Gastrocnemius medialis (tissue), 4 donors: ENCODE measurements at regions of chr12 and their contacts with region 1.

Region 1: DNA sequence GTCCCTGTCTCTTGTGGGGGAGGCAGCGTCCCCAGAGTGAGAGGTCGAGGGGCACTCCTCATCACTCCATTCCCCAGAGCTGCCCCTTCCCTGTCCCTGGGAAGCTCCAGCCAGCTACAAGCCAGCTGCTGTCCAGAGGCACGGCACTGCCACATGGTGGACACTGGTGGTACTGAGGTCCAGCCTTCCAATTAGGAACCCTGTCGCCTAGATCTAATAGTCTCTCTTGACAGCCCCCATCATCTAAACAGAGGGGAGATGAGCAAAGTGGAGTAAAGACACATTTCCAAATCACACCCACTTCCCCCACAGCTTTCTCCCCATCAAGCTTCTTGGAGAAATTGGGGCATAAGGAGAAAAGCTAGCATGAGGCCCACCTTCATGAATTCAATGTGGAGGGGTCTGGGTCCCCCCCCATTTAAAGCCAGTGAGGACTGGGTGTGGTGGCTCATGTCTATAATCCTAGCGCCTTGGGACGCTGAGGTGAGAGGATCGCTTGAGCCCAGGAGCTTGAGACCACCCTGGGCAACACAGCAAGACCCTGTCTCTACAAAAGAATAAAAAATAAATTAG is 2.1 kb upstream of the INHBE start:
- DNase-seq: peak; percentile 65 to 82
- ATAC-seq: peak; percentile 68 to 71
- H3K4me3 ChIP-seq: no peak overlapping the region
- H3K27ac ChIP-seq: peak overlapping the region; percentile 81 to 92 (median 90)
- H3K4me1 ChIP-seq: peaks cover 31 to 51% of the 10 kb centered on the region in 2 donors
- H3K27me3 ChIP-seq: no peaks in the 10 kb centered on the region
- CTCF ChIP-seq: peak; percentile 92 to 96 (median 95)
- POLR2A ChIP-seq: no peak

Region 2: GRCh38 chr12:57213058-57213715 is 239.8 kb before region 1 on chr12:
- in situ Hi-C with region 1: no loop called
- intact Hi-C with region 1: loop called (anchors 2 kb)
- DNase-seq: peak; percentile 72 to 85
- ATAC-seq: peak; percentile 75 to 78
- H3K4me3 ChIP-seq: no peak overlapping the region
- H3K27ac ChIP-seq: no peak overlapping the region
- H3K4me1 ChIP-seq: peaks cover 6 to 23% of the 10 kb centered on the region in 2 donors
- H3K27me3 ChIP-seq: peaks cover 30 to 35% (median 34%) of the 10 kb centered on the region in 3 donors
- CTCF ChIP-seq: peak; percentile 78 to 98 (median 91)
- POLR2A ChIP-seq: no peak

Region 3: DNA sequence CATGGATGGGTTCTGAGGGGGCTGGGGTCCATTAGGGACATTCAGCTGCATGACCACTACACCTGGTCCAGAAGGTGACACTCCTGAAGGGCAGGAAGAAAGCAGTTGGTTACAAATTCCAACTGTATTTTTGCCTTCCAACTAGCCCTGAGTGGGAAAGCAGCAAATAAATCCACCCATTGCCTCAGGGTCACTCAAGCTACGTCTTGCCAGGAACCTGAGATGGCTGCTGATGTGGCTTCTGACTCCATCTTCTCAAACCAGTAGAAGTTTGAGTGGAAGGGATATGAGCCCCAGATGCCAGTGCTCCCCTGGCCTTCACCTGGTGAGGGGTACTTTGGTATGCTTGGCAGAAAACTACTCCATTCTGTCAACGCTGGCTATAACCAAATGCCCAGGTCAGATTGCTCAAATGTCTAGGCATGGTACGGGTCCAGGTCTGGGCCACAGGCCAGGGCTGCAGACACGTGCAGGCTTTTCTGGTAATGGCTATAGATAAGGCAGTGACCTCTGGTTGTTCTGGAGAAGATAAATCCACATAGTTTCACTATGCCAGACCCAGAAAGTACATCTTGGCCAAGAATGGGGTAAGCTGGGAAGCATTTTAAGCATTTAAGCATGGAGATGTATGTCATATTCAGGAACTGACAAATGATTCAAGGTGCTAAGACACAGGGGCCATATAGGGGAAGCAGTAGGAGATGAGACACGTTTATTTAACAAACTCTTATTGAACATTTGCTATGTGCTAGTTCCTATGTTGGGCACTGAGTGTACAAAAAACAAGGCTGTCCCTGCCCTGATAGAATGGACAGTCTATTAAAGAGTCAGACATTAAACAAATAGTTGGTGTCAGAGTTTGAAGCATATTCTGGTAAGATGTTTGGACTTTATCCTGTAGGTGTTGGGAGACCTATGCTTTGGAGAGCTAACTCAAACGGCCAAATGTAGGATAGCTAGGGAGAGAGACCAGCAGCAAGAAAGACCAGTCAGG is 193.7 kb before region 1 on chr12:
- in situ Hi-C with region 1: loop called in 2 of 4 experiments (anchors 10 to 25 kb)
- intact Hi-C with region 1: loop called (anchors 1 kb)
- DNase-seq: peak in 1 of 2 donors; percentile 47
- ATAC-seq: no peak
- H3K4me3 ChIP-seq: no peak overlapping the region
- H3K27ac ChIP-seq: peak overlapping the region; percentile 82 to 85 (median 82)
- H3K4me1 ChIP-seq: peaks cover 59 to 71% of the 10 kb centered on the region in 2 donors
- H3K27me3 ChIP-seq: no peaks in the 10 kb centered on the region
- CTCF ChIP-seq: no peak
- POLR2A ChIP-seq: no peak

Region 4: GRCh38 chr12:57340104-57340503 is 112.9 kb before region 1 on chr12:
- in situ Hi-C with region 1: no loop called
- intact Hi-C with region 1: loop called (anchors 5 kb)
- DNase-seq: peak; percentile 28 to 30
- ATAC-seq: peak; percentile 60
- H3K4me3 ChIP-seq: no peak overlapping the region
- H3K27ac ChIP-seq: peak overlapping the region in 2 of 4 donors; percentile 21 to 27
- H3K4me1 ChIP-seq: peaks cover 32 to 36% of the 10 kb centered on the region in 2 donors
- H3K27me3 ChIP-seq: no peaks in the 10 kb centered on the region
- CTCF ChIP-seq: no peak
- POLR2A ChIP-seq: no peak

Region 5: GRCh38 chr12:57430931-57431720 is 21.9 kb before region 1 on chr12 and contains the start of gene R3HDM2:
- in situ Hi-C with region 1: no loop called
- intact Hi-C with region 1: loop called (anchors 1 kb)
- DNase-seq: peak; percentile 93 to 95
- ATAC-seq: peak; percentile 96 to 98
- H3K4me3 ChIP-seq: peak within 1 kb of the TSS; percentile 66 to 92 (median 70)
- H3K27ac ChIP-seq: peak within 1 kb of the TSS; percentile 91 to 95 (median 95)
- H3K4me1 ChIP-seq: peaks cover 6 to 14% of the 10 kb centered on the region in 2 donors
- H3K27me3 ChIP-seq: no peaks in the 10 kb centered on the region
- CTCF ChIP-seq: no peak
- POLR2A ChIP-seq: peak; percentile 93
- total RNA-seq, gene R3HDM2: 24.1 to 27.1 (median 25.6) TPM

Region 6: DNA sequence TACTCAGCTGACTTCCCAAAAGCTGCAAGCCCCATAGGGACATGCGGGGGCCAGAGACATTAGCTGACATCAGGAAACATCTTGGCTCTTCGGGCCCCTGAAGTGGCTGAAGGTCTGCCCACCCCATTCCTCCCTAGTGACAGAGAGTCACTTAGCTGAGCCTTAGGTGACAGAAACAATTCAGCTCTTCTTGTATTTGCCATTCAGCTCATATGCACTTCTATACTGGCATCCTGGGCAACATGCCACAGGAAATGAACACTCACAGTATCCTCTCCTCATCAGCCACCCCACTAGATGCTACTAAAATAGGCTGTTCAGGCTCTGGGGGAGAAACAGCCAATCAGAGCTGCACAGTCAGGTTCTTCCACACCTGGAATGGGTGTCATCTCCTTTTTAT is 90.6 kb after region 1 on chr12:
- in situ Hi-C with region 1: no loop called
- intact Hi-C with region 1: no loop called
- DNase-seq: no peak
- ATAC-seq: no peak
- H3K4me3 ChIP-seq: no peak overlapping the region
- H3K27ac ChIP-seq: peak overlapping the region in 1 of 4 donors; percentile 8
- H3K4me1 ChIP-seq: peaks cover 15 to 19% of the 10 kb centered on the region in 2 donors
- H3K27me3 ChIP-seq: peaks cover 0 to 5% (median 4%) of the 10 kb centered on the region in 3 donors
- CTCF ChIP-seq: no peak
- POLR2A ChIP-seq: no peak